Activated CD4-positive, alpha-beta memory T cell treated with anti-CD3 and anti-CD28 coated beads, Interleukin-2, amount 10 ng/mL, durations not matched to agents 7 days and 5 days (primary cell): ENCODE measurements at regions of chr3 and their contacts with region 1.

Region 1: DNA sequence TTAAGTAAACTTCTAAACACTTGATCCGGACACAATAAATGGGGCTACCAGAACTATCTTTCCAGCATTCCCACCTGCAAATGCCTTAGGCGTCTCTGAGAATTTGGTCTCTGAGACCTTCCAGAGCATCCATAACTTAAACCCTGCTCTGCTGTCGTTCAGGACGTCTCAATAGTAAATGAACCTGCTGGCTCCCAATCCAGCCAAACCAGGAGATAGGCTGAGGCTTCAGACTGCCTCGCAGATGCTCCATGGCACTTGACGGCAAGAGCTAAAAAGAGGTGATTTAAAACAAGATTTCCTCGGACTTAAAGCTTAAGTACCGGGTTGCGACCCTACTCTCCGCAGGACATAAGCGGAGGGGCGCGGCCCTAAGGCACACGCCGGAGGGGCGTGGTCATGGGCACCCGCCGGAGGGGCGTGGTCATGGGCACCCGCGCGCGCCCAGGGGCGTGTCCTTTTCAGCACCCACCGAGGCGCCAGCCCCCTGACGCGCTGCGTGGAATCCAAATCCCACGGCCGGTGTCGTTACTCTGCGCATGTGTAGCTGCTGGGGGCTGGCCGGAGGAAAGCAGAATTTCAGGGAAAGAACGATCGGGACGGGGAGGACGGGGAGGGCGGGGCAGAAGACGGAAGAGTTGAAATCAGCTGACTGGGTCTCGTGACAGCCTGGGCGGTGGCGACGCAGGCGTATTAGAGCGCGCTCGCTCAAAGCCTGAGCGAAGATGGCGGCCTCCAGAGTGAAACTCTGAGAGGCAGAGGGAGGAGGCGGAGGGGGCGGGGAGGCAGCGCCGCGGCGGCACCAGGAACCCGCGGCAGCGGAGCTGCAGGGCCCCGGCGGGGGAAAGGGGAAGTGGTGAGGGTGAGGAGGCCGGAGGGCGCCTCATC is at the start of gene DNAJC13:
- DNase-seq: peak; percentile 93
- H3K4me3 Mint-ChIP-seq: peak within 1 kb of the TSS; percentile 99
- H3K27ac Mint-ChIP-seq: peak within 1 kb of the TSS; percentile 95
- H3K4me1 Mint-ChIP-seq: peaks cover 34% of the 10 kb centered on the region
- H3K27me3 Mint-ChIP-seq: no peaks in the 10 kb centered on the region
- total RNA-seq, gene DNAJC13: 31.0 to 36.7 TPM

Region 2: DNA sequence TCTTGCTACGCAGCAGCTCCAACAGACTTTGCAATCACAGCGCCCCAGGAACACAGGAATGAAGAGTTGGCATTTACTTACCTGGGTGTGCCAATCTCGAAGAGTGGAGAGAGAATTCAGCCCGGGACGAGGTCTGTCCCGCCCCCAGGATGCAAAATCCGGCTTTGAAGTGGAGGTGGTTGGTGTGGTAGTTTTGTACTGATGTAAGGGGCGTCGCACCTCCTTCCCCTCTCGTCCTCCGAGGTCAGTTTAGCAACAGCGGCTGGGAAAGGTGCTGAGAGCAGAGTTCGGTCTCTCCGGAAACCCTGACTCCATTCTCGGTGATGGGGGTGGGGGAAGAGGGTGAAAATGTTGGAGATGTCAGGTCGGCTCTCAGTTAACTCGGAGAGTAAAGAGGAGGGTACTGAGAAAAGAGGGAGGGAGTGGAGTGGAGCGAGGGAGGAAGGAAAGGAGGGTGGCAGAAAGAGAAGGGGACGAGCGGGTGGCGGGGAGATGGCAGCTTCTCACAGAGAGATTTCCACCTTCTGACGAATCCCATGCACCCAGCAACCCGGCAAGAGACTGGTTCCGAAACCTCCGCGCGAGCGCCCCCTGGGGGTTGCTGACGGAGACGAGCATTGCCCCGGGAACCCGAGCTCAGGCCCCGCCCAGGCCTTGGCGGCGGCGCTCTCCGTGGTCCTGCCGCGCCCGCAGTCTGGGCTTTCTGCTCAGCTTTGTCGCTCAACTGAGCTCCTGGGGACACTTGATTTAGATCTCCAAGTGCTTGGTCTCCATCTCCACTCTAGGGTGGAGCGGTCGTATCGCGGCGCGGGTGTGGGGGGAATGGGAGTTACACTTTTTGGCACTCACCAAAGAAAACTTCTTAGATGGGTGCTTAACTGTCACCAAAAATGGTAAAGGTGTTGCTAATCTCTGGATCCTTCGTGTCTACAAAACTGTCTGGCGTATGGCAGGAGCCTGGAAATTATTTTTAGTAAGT is 382.3 kb before region 1 on chr3 and contains the start of gene CPNE4:
- CTCF ChIA-PET with region 1: no interaction called
- POLR2A ChIA-PET with region 1: no interaction called
- DNase-seq: peak; percentile 78
- H3K4me3 Mint-ChIP-seq: no peak within 1 kb of the TSS
- H3K27ac Mint-ChIP-seq: no peak within 1 kb of the TSS
- H3K4me1 Mint-ChIP-seq: peaks cover 5% of the 10 kb centered on the region
- H3K27me3 Mint-ChIP-seq: peaks cover 44% of the 10 kb centered on the region
- total RNA-seq, gene CPNE4: not detected

Region 3: GRCh38 chr3:132432639-132433038 is 15.6 kb after region 1 on chr3:
- CTCF ChIA-PET with region 1: no interaction called
- POLR2A ChIA-PET with region 1: interaction called, 15 read pairs
- DNase-seq: no peak
- H3K4me3 Mint-ChIP-seq: no peak overlapping the region
- H3K27ac Mint-ChIP-seq: no peak overlapping the region
- H3K4me1 Mint-ChIP-seq: peaks cover 32% of the 10 kb centered on the region
- H3K27me3 Mint-ChIP-seq: no peaks in the 10 kb centered on the region